Colonic mucosa (tissue), 4 donors: ENCODE measurements at regions of chr5 and their contacts with region 1.

Region 1: DNA sequence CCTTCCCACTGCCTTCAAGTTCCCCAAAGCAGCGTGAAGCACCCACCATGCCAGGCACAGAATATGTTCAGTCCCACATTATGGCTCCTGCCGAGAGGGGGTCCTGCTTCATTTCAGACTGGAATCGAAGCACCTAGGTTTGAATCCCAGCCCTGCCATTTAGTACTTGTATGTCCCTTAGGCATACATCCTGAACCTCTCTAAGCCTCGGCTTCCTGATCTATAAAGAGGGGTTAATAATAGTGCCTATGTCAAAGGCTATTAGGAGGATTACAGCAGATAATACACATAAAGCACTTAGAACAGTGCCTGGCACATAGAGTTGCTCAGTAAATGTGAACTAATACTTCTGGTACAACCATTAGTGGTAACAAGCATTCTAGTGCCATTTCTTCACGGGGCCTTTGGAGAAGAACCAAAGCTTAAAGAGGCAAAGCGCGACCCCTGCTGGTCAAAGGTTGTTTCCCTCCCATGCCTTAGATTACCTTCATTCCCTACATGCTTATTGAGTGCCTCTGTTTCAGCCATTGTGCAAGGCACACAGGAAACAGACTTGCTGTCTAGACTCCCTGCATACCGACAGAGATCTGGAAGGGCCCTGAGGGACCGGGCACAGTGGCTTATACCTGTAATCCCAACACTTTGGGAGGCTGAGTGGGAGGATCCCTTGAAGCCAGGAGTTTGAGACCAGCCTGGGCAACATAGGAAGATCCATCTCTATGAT is 98.2 kb downstream of the PPARGC1B start:
- DNase-seq: peak; percentile 93
- H3K4me3 ChIP-seq: no peak overlapping the region
- H3K27ac ChIP-seq: no peak overlapping the region
- H3K4me1 ChIP-seq: no peaks in the 10 kb centered on the region
- H3K27me3 ChIP-seq: no peaks in the 10 kb centered on the region
- CTCF ChIP-seq: peak; percentile 89

Region 2: DNA sequence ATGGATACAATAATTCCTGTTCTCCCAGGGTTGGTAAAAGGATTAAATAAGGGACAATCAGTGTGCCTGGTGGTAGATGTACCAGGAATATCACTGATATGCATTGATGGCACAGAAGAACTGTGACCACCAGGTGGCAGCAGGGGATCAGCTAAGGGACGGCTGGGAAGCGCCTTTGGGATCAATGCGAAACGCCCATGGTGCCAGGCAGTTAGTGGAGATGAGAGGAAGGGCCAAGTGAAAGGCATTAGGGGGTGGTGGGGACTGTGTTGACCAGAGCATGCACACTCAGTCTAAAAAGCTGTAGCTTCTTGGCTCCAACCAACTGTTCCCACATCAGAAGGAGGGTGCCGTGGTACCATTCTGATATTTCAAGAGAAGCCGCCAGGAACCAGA is 191.5 kb before region 1 on chr5:
- intact Hi-C with region 1: loop called (anchors 2 kb)
- DNase-seq: peak; percentile 90
- H3K4me3 ChIP-seq: no peak overlapping the region
- H3K27ac ChIP-seq: no peak overlapping the region
- H3K4me1 ChIP-seq: peaks cover 6% of the 10 kb centered on the region
- H3K27me3 ChIP-seq: no peaks in the 10 kb centered on the region
- CTCF ChIP-seq: peak; percentile 83

Region 3: GRCh38 chr5:149656576-149657182 is 171.6 kb before region 1 on chr5:
- intact Hi-C with region 1: loop called (anchors 5 kb)
- DNase-seq: peak; percentile 85
- H3K4me3 ChIP-seq: no peak overlapping the region
- H3K27ac ChIP-seq: peak overlapping the region; percentile 30
- H3K4me1 ChIP-seq: peaks cover 4% of the 10 kb centered on the region
- H3K27me3 ChIP-seq: no peaks in the 10 kb centered on the region
- CTCF ChIP-seq: peak; percentile 79

Region 4: DNA sequence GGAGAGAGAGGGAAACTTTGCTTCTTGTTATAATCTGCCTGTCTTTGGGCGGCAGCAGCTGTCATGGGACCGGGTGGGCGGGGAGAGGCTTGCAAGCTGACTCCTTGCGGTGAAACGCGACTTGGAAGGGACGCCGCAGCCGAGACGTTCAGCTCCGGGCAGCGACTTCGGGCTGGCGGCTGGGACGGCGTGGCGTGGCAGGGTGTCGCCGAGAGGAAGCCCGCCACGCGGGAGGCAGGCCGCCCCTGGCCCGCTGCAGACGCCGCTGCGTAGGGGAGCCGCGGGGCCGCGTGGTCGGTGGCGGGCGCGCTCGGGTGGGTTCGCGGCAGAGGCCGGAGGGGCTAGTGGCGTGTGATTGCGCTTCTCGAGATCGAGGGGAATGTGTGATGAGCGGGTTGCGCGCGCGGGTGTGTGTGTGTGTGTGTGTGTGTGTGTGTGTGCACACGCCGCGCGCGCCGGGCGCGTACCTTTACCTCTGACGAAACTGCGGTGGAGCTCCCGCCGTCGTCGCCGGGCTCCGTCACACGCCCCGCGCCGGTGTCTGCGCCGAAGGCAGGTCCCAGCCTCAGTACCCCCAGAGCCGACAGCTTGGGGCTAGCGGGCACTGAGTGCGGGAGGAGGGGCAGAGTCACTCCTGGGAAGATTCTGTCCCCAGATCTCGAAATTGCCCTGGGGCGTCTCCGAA is 96.5 kb before region 1 on chr5:
- intact Hi-C with region 1: loop called (anchors 2 kb)
- DNase-seq: peak; percentile 96
- H3K4me3 ChIP-seq: peak overlapping the region; percentile 75
- H3K27ac ChIP-seq: peak overlapping the region; percentile 92
- H3K4me1 ChIP-seq: peaks cover 7% of the 10 kb centered on the region
- H3K27me3 ChIP-seq: no peaks in the 10 kb centered on the region
- CTCF ChIP-seq: no peak